A549 (cell line): ENCODE measurements at regions of chr15 and their contacts with region 1.

Region 1: GRCh38 chr15:93030430-93031105 is 58.4 kb downstream of the RGMA start:
- DNase-seq: peak; percentile 69 to 91
- ATAC-seq: peak; percentile 70 to 89
- H3K4me3 ChIP-seq: no peak overlapping the region
- H3K27ac ChIP-seq: peak overlapping the region in 1 of 2 experiments; percentile 42; a peak in 2 of 6 replicates
- H3K4me1 ChIP-seq: peaks cover 24% of the 10 kb centered on the region; the same call in 2 of the 3 replicates
- CTCF ChIP-seq: peak; percentile 89
- EP300 ChIP-seq: no peak
- POLR2A ChIP-seq: no peak
- RAD21 ChIP-seq: peak; percentile 94 to 96

Region 2: DNA sequence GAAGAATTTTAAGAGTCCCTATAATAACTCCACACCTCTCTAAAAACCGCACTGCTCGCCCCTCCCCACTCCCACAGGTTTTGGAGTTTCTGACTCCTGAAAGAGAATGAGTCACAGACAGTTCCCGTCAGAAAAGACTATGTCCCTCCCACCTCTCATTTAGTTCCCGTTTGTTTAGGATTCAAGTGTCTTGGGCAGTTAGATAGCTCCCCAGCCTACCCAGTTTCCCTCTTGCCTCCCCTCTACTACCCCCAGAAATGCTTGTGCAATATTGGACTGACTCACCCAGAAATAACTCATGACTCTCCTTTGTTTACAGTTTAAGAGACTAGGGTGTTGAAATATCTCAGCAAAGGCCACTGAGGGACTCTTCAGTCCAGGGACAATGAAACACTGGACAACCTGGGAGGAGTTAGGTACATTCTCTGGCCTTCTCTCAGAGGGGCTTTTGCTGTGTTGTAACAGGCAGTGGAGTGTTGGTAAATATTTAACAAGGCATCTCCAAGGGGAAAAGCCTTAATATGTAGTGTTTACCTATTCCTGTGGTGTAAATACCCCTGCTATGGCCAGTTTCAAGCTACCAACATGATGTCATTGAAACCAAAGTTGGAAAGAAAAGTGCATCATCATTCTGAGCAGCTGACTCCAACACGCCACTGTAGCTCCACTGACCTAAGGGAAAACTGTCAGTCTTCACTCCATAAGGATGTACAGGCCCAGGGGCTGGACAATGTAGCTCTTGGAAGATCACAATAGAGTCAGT is 226.5 kb before region 1 on chr15:
- CTCF ChIA-PET with region 1: interaction called, 29 read pairs
- POLR2A ChIA-PET with region 1: interaction called, 3 read pairs
- DNase-seq: peak; percentile 96 to 100
- ATAC-seq: peak; percentile 85 to 87
- H3K4me3 ChIP-seq: no peak overlapping the region
- H3K27ac ChIP-seq: peak overlapping the region; percentile 95 to 97
- H3K4me1 ChIP-seq: peaks cover 48% of the 10 kb centered on the region
- CTCF ChIP-seq: no peak
- EP300 ChIP-seq: peak; percentile 98
- POLR2A ChIP-seq: no peak
- RAD21 ChIP-seq: peak; percentile 45 to 60; a peak in 3 of 5 replicates

Region 3: DNA sequence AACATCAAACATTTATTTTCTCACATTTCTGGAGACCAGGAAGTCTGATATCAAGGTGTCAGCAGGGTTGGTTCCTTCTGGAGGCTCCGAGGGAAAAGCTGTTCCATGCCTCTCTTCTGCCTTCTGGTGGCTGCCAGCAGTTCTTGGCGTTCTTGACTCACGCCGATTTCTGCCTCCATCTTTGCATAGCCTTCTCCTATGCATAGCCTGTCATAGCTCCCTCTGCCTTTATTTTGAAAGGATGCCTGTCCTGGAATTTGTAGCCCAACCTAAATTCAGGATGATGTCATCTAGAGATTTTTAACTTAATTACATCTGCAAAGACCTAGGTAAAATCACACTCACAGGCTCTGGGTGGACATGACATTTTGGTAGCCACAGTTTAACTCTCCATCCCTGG is 12.0 kb before region 1 on chr15:
- CTCF ChIA-PET with region 1: interaction called, 121 read pairs
- POLR2A ChIA-PET with region 1: no interaction called
- DNase-seq: peak in 1 of 2 experiments; percentile 71
- ATAC-seq: peak; percentile 79
- H3K4me3 ChIP-seq: no peak overlapping the region
- H3K27ac ChIP-seq: no peak overlapping the region
- H3K4me1 ChIP-seq: no peaks in the 10 kb centered on the region
- CTCF ChIP-seq: peak; percentile 38
- EP300 ChIP-seq: no peak
- POLR2A ChIP-seq: no peak
- RAD21 ChIP-seq: peak; percentile 36 to 61; a peak in 3 of 5 replicates

Region 4: DNA sequence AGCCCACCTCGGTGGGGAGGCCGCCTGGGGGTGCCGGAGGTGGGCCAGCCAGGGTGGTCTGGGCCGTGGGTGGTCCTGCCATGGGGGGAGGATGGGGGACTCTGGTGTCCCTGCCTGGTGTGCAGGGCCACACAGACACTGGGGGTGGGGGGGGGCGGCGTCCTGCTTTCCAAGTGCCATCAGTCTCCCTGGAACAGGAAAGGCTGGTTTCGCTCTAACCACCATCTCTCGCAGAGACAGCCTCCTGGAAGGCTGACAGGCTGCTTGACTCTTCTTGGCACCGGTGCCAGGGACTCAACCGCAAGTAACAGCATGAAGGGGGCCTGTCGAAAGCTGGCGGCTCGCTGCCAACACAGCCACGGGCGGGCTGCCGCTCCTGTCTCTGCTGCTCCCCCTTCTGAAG is 18.2 kb after region 1 on chr15:
- CTCF ChIA-PET with region 1: interaction called, 114 read pairs
- POLR2A ChIA-PET with region 1: no interaction called
- DNase-seq: no peak
- ATAC-seq: no peak
- H3K4me3 ChIP-seq: no peak overlapping the region
- H3K27ac ChIP-seq: no peak overlapping the region
- H3K4me1 ChIP-seq: no peaks in the 10 kb centered on the region
- CTCF ChIP-seq: no peak
- EP300 ChIP-seq: no peak
- POLR2A ChIP-seq: no peak
- RAD21 ChIP-seq: no peak

Region 5: DNA sequence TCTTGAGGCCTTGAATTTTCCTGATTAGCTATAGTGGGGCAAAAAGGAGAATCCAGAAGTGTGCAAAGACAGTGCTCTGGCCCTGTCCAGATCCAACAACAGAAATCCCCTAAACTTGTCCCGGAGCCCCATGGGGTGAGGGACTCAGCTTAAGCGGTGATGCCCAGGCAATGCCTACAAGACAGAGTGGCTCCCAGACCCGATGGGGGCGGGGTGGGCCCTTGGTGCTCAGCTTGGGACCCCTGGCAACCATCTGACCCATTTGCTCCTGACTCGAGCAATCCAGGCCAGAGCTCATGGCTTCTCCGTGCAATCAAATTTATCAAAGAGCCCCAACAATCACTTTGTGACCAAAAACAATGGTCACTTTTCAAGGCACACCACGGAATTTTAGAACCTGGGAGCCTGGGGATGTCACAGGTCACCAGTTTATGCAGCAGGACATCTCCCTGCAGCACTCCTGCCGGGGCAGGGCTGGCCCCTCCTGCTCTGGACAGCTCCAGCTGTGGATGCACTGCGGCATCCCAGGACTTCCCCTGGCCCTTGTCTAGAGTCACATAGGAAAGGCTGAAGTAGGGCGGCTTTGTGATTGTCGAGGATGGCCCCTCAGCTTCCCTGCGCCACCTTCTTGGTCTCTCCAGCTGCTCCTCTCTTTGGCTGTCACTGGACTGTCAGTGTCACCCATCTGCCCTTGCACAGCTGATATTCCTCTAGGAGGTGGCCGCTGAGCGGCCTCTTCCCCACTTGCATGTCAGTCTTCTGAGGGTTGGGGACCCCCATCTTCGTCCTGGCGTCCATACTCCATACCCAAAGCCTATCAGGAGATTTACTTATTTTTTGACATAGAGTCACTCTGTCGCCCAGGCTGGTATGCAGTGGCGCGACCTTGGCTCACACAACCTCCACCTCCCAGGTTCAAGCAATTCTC is 30.0 kb after region 1 on chr15:
- CTCF ChIA-PET with region 1: interaction called, 18 read pairs
- POLR2A ChIA-PET with region 1: no interaction called
- DNase-seq: no peak
- ATAC-seq: 0 out of 6 replicates have a peak, but pooled peaks of 1 of the 2 experiments have one; percentile 7
- H3K4me3 ChIP-seq: no peak overlapping the region
- H3K27ac ChIP-seq: no peak overlapping the region
- H3K4me1 ChIP-seq: no peaks in the 10 kb centered on the region
- CTCF ChIP-seq: no peak
- EP300 ChIP-seq: no peak
- POLR2A ChIP-seq: no peak
- RAD21 ChIP-seq: no peak

Region 6: DNA sequence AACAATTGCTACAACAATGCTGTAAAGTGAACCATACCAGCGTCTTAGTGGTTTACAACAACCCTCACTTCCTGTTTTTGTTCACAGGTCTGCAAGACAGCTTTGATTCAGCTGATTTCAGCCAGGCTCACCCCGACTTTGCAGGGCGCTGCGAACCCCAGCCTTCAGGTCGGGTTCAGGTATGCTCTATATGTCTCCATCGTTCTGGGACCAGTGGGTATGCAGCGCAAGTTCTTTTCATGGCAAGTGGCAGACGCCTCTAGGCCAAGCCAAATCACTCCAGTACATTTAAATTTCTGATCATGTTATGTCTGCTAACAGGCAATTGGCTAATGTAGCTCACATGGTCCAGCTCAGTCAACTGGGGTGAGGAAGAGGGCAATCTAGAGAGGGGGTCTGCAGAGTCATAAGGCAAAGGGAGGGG is 110.8 kb after region 1 on chr15:
- CTCF ChIA-PET with region 1: no interaction called
- POLR2A ChIA-PET with region 1: no interaction called
- DNase-seq: no peak
- ATAC-seq: no peak
- H3K4me3 ChIP-seq: no peak overlapping the region
- H3K27ac ChIP-seq: no peak overlapping the region
- H3K4me1 ChIP-seq: no peaks in the 10 kb centered on the region
- CTCF ChIP-seq: no peak
- EP300 ChIP-seq: no peak
- POLR2A ChIP-seq: no peak
- RAD21 ChIP-seq: no peak

Region 7: DNA sequence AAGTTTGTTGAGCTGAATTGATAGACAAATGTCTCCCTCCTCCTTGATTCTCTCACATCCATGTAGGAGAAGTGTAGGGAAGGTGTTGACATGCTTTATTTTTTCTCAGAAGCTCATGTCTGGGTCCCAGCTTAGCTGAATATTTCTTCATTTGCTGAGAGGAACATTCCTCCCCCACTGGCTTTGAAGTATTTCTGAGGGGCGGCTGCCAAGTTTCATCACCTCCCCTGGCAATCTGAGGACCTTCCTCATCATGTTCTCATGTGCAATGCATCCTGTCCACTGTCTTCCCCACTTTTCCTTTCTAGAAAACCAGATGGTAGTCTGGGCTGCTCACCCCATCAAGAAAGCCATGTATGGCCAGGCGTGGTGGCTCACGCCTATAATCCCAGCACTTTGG is 227.4 kb after region 1 on chr15:
- CTCF ChIA-PET with region 1: no interaction called
- POLR2A ChIA-PET with region 1: no interaction called
- DNase-seq: no peak
- ATAC-seq: no peak
- H3K4me3 ChIP-seq: no peak overlapping the region
- H3K27ac ChIP-seq: no peak overlapping the region
- H3K4me1 ChIP-seq: no peaks in the 10 kb centered on the region
- CTCF ChIP-seq: no peak
- EP300 ChIP-seq: no peak
- POLR2A ChIP-seq: no peak
- RAD21 ChIP-seq: no peak

Region 8: DNA sequence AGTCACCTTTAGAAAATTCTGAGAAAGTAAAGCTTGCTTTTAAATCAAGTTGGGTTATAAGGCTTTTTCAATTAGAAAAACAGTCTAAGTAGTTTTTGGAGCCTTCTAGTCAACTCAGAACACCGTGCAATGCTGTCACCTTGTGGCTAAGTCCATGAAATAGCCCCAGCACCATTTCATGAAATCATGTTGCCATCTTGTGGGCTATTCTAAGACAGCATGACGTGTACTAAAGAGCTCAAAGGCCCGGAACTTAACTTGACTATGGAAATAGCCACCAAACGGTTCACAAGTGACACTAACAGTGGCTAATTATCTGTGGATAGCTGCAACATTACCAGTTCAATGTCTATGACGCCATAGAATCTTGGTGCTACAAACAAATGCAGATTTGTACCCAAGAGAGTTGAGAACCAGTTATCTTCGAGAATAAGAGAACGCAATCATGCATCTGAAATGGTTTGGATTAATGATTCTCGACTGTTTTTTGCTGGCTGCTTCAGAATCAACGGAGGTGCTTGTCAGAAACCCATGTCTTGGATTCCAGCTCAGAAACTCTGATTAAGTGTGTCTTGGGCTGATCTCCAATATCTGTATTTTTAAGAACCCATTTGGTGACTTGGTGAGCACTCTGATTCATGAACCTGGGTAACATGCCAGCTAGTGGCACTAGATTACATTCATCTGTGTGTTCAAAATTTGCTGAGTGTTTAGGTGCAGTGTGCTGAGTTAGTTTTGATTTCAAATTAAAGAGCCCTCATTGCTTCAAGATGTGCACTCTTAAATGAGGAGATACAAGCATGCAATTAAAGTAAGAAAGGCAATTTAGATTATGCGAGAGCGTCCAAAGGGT is 1089.6 kb after region 1 on chr15:
- CTCF ChIA-PET with region 1: interaction called, 97 read pairs
- POLR2A ChIA-PET with region 1: no interaction called
- DNase-seq: peak; percentile 51 to 86
- ATAC-seq: peak; percentile 94 to 99
- H3K4me3 ChIP-seq: no peak overlapping the region
- H3K27ac ChIP-seq: no peak overlapping the region
- H3K4me1 ChIP-seq: no peaks in the 10 kb centered on the region
- CTCF ChIP-seq: peak; percentile 96
- EP300 ChIP-seq: no peak
- POLR2A ChIP-seq: no peak
- RAD21 ChIP-seq: peak; percentile 92 to 97

Region 9: DNA sequence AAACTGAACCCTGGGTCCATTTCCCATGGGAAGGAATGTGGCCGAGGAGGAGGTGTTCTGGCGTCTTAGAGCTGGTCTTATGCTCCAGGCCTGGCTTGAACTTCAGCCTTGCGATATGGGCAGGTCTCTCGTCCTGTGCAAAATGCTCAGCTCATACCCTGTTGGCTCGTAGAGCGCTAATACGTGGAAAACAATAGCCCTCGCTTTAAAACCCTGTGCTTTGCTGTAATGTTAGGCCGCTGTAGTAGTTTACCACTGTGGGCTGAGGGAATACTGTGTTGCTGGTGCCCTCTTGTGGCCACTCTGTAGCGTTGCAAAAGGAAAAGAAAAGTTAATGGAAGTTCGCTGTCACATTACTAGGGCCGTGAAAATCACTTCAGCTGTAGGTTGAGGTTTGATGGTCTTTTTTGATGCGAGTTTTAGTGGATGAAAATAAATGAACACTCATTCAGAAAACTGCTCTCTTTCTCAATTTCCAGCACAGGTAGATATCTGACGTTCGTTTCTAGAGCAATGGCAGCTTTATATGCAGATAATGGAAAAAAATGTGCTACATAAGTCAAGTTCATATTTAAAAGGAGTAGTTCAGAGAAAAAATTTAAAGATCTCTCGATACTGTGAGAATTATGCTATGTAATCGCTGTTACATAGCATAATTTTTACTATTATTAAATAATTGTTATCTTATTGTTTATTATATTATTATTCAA is 1293.7 kb after region 1 on chr15:
- CTCF ChIA-PET with region 1: interaction called, 34 read pairs
- POLR2A ChIA-PET with region 1: no interaction called
- DNase-seq: peak; percentile 38 to 62
- ATAC-seq: peak; percentile 84 to 94
- H3K4me3 ChIP-seq: no peak overlapping the region
- H3K27ac ChIP-seq: no peak overlapping the region
- H3K4me1 ChIP-seq: no peaks in the 10 kb centered on the region
- CTCF ChIP-seq: peak; percentile 79
- EP300 ChIP-seq: no peak
- POLR2A ChIP-seq: no peak
- RAD21 ChIP-seq: peak; percentile 79 to 81